PC-3 (cell line): ENCODE measurements at regions of chr14 and their contacts with region 1.

Region 1: GRCh38 chr14:65412032-65412846 is at the start of gene FUT8:
- DNase-seq: peak; percentile 98
- ATAC-seq: peak; percentile 82
- H3K4me3 ChIP-seq: peak within 1 kb of the TSS; percentile 86
- H3K27ac ChIP-seq: peak within 1 kb of the TSS; percentile 86
- H3K4me1 ChIP-seq: peaks cover 25% of the 10 kb centered on the region
- H3K27me3 ChIP-seq: no peaks in the 10 kb centered on the region
- CTCF ChIP-seq: peak; percentile 72
- total RNA-seq, gene FUT8: 129 and 132 TPM in 2 replicates

Region 2: GRCh38 chr14:64573109-64573508 is 839.1 kb before region 1 on chr14:
- CTCF ChIA-PET with region 1: no interaction called
- POLR2A ChIA-PET with region 1: no interaction called
- intact Hi-C with region 1: no loop called
- DNase-seq: no peak
- ATAC-seq: no peak
- H3K4me3 ChIP-seq: no peak overlapping the region
- H3K27ac ChIP-seq: no peak overlapping the region
- H3K4me1 ChIP-seq: peaks cover 11% of the 10 kb centered on the region
- H3K27me3 ChIP-seq: no peaks in the 10 kb centered on the region
- CTCF ChIP-seq: no peak

Region 3: GRCh38 chr14:65255536-65256461 is 156.4 kb before region 1 on chr14:
- CTCF ChIA-PET with region 1: interaction called, 7 read pairs
- POLR2A ChIA-PET with region 1: interaction called, 3 read pairs
- intact Hi-C with region 1: loop called (anchors 1 kb)
- DNase-seq: peak; percentile 95
- ATAC-seq: peak; percentile 62
- H3K4me3 ChIP-seq: peak overlapping the region; percentile 34
- H3K27ac ChIP-seq: peak overlapping the region; percentile 96
- H3K4me1 ChIP-seq: peaks cover 58% of the 10 kb centered on the region
- H3K27me3 ChIP-seq: no peaks in the 10 kb centered on the region
- CTCF ChIP-seq: no peak

Region 4: GRCh38 chr14:65356327-65356852 is 55.8 kb before region 1 on chr14:
- CTCF ChIA-PET with region 1: interaction called, 6 read pairs
- POLR2A ChIA-PET with region 1: interaction called, 8 read pairs
- intact Hi-C with region 1: loop called (anchors 1 kb)
- DNase-seq: peak; percentile 100
- ATAC-seq: peak; percentile 83
- H3K4me3 ChIP-seq: peak overlapping the region; percentile 13; the same call in 1 of the 2 replicates
- H3K27ac ChIP-seq: peak overlapping the region; percentile 97
- H3K4me1 ChIP-seq: peaks cover 68% of the 10 kb centered on the region
- H3K27me3 ChIP-seq: no peaks in the 10 kb centered on the region
- CTCF ChIP-seq: no peak

Region 5: DNA sequence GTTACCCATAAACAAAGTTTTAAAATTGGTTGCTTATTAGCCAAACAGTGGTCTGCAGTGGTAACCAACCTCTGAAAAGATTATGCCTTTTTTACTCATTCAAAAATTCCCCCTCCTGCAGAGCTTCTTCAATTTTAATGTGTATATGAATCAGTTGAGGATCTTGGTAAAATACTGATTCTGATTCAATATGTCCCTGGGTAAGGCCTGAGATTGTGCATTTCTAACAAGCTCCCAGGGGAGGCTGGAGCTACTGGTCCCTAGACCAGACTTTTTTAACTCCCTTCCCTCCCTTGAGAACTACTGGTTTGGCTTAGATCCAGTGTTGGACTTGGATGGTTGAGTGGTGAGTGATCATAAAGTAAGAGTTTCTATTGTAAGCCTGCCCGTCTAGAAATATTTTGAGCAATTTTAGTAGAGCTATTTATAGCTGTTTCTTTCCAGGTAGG is 90.5 kb after region 1 on chr14:
- CTCF ChIA-PET with region 1: interaction called, 6 read pairs
- POLR2A ChIA-PET with region 1: interaction called, 3 read pairs
- intact Hi-C with region 1: loop called (anchors 2 kb)
- DNase-seq: peak; percentile 91
- ATAC-seq: peak; percentile 68
- H3K4me3 ChIP-seq: no peak overlapping the region
- H3K27ac ChIP-seq: no peak overlapping the region
- H3K4me1 ChIP-seq: peaks cover 11% of the 10 kb centered on the region; the same call in 1 of the 2 replicates
- H3K27me3 ChIP-seq: no peaks in the 10 kb centered on the region
- CTCF ChIP-seq: no peak

Region 6: GRCh38 chr14:65776193-65776852 is 364.1 kb after region 1 on chr14:
- CTCF ChIA-PET with region 1: no interaction called
- POLR2A ChIA-PET with region 1: no interaction called
- intact Hi-C with region 1: loop called (anchors 5 kb)
- DNase-seq: no peak
- ATAC-seq: peak; percentile 51
- H3K4me3 ChIP-seq: no peak overlapping the region
- H3K27ac ChIP-seq: no peak overlapping the region
- H3K4me1 ChIP-seq: peaks cover 15% of the 10 kb centered on the region
- H3K27me3 ChIP-seq: no peaks in the 10 kb centered on the region
- CTCF ChIP-seq: no peak

Region 7: GRCh38 chr14:66070509-66071319 is 658.5 kb after region 1 on chr14:
- CTCF ChIA-PET with region 1: interaction called, 5 read pairs
- POLR2A ChIA-PET with region 1: no interaction called
- intact Hi-C with region 1: loop called (anchors 2 kb)
- DNase-seq: peak; percentile 74
- ATAC-seq: peak; percentile 76
- H3K4me3 ChIP-seq: no peak overlapping the region
- H3K27ac ChIP-seq: no peak overlapping the region
- H3K4me1 ChIP-seq: peaks cover 4% of the 10 kb centered on the region; the same call in 1 of the 2 replicates
- H3K27me3 ChIP-seq: peaks cover 67% of the 10 kb centered on the region
- CTCF ChIP-seq: peak; percentile 97